ENCODE measurements at regions of chr12 and their contacts with region 1.

Region 1: GRCh38 chr12:68223083-68223747 is 2.4 kb downstream of the IL26 start:
- DNase-seq: peak; percentile 79 to 90 (median 85)
- ATAC-seq: peak; percentile 100
- H3K4me3 ChIP-seq: no peak overlapping the region
- H3K27ac ChIP-seq: no peak overlapping the region
- H3K4me1 ChIP-seq: no peaks in the 10 kb centered on the region; a peak in 1 of 5 replicates
- H3K27me3 ChIP-seq: peaks cover 3 to 7% of the 10 kb centered on the region in 2 experiments; a peak in 2 of 5 replicates
- CTCF ChIP-seq: peak; percentile 89 to 94 (median 91)
- EP300 ChIP-seq: no peak
- POLR2A ChIP-seq: no peak
- RAD21 ChIP-seq: peak; percentile 97

Region 2: GRCh38 chr12:68310370-68310769 is 87.2 kb after region 1 on chr12:
- CTCF ChIA-PET with region 1: interaction called, 3 read pairs
- POLR2A ChIA-PET with region 1: interaction called, 3 read pairs
- in situ Hi-C with region 1: loop called (anchors 5 kb)
- intact Hi-C with region 1: no loop called
- DNase-seq: no peak
- ATAC-seq: no peak
- H3K4me3 ChIP-seq: no peak overlapping the region
- H3K27ac ChIP-seq: no peak overlapping the region
- H3K4me1 ChIP-seq: no peaks in the 10 kb centered on the region
- H3K27me3 ChIP-seq: no peaks in the 10 kb centered on the region
- CTCF ChIP-seq: no peak
- EP300 ChIP-seq: no peak
- POLR2A ChIP-seq: no peak
- RAD21 ChIP-seq: no peak